Spleen (tissue), 13 donors: ENCODE measurements at regions of chr14 and their contacts with region 1.

Region 1: GRCh38 chr14:100842799-100843198 is 16.9 kb downstream of the MEG3 start:
- DNase-seq: peak; percentile 10
- H3K4me3 ChIP-seq: peak overlapping the region in 1 of 8 donors; percentile 34
- H3K27ac ChIP-seq: peak overlapping the region in 5 of 8 donors; percentile 24 to 79 (median 70)
- H3K4me1 ChIP-seq: peaks cover 0 to 4% (median 0%) of the 10 kb centered on the region in 6 donors
- H3K27me3 ChIP-seq: no peaks in the 10 kb centered on the region
- CTCF ChIP-seq: no peak
- POLR2A ChIP-seq: no peak

Region 2: GRCh38 chr14:100662879-100663760 is 179.7 kb before region 1 on chr14:
- intact Hi-C with region 1: loop called (anchors 10 kb)
- DNase-seq: peak; percentile 87
- H3K4me3 ChIP-seq: no peak overlapping the region
- H3K27ac ChIP-seq: peak overlapping the region in 3 of 8 donors; percentile 39 to 55 (median 41)
- H3K4me1 ChIP-seq: peaks cover 0 to 68% (median 32%) of the 10 kb centered on the region in 6 donors
- H3K27me3 ChIP-seq: peaks cover 0 to 8% (median 0%) of the 10 kb centered on the region in 7 donors
- CTCF ChIP-seq: peak; percentile 56 to 91 (median 82)
- POLR2A ChIP-seq: no peak

Region 3: DNA sequence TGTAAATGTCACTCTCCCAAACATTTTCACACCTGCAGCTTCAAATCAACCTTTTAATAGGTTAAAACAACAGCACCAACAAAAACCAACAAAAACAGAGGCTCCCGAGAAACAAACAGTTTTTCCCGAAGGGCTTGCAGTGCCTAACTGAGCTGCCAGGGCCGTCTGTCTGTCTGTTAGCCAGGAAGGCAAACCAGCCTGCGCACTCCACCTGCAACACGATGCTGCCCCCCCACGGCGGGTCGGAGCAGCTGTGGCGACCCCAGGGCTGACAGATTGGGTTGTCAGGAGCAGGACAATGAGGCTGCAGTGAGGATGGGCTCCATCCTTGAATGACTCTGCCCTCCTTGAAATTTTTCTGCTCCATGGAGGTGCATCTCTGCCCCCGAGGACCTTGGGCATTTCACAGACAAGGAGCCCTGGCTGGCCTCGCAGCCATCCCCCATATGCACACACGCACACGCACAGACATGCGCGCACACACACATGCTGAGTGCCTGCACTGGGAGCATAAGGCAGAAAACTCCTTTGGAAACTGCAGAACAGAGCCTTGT is 58.1 kb after region 1 on chr14:
- intact Hi-C with region 1: no loop called
- DNase-seq: peak; percentile 80
- H3K4me3 ChIP-seq: no peak overlapping the region
- H3K27ac ChIP-seq: no peak overlapping the region
- H3K4me1 ChIP-seq: peaks cover 0 to 41% (median 20%) of the 10 kb centered on the region in 6 donors
- H3K27me3 ChIP-seq: peaks cover 0 to 88% (median 16%) of the 10 kb centered on the region in 7 donors
- CTCF ChIP-seq: peak in 8 of 11 experiments; percentile 10 to 48 (median 34)
- POLR2A ChIP-seq: no peak